Activated T-helper 2 cell treated with anti-CD3 and anti-CD28 coated beads, Interferon-gamma antibody, Interleukin-2, Interleukin-4, amounts not matched to agents 10 μg/mL and 5 μg/mL and 100 μg/mL, durations not matched to agents 14 hours and 24 hours and 36 hours (primary cell): ENCODE measurements at regions of chr16 and their contacts with region 1.

Region 1: DNA sequence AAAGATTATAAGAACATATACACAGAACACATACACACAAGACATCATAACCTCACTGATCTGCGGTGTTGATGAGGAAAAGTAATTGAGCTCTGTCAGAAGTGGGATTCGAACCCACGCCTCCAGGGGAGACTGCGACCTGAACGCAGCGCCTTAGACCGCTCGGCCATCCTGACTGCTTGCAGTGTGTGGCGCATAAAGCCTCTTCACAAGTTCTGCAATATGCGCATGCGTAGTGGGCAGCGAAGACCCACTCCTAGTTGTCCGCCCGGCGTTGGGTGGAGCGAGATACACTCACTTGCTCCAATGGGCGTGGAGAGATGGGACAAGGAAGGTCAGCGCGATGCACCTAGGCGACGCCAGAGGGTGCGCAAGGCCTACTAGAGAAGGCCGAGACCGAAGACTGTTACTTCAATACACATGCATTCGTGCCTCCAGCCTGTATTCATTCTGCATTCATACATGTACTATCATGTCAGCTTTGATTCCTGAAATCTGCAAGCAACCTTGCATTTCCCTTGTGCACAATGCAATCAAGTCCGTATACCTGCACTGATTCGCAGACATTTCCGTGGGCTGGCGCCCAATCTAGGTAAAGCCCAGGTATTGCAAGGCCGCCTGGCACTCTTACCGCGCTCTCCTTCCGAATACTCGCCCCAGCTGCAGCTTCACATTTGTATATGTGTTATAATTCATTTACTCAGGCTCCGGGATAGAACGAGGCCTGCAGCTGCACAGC is 16.1 kb upstream of the PLLP start:
- DNase-seq: peak; percentile 99
- H3K4me3 Mint-ChIP-seq: no peak overlapping the region
- H3K27ac Mint-ChIP-seq: no peak overlapping the region
- H3K4me1 Mint-ChIP-seq: peaks cover 16% of the 10 kb centered on the region
- H3K27me3 Mint-ChIP-seq: peaks cover 2% of the 10 kb centered on the region

Region 2: DNA sequence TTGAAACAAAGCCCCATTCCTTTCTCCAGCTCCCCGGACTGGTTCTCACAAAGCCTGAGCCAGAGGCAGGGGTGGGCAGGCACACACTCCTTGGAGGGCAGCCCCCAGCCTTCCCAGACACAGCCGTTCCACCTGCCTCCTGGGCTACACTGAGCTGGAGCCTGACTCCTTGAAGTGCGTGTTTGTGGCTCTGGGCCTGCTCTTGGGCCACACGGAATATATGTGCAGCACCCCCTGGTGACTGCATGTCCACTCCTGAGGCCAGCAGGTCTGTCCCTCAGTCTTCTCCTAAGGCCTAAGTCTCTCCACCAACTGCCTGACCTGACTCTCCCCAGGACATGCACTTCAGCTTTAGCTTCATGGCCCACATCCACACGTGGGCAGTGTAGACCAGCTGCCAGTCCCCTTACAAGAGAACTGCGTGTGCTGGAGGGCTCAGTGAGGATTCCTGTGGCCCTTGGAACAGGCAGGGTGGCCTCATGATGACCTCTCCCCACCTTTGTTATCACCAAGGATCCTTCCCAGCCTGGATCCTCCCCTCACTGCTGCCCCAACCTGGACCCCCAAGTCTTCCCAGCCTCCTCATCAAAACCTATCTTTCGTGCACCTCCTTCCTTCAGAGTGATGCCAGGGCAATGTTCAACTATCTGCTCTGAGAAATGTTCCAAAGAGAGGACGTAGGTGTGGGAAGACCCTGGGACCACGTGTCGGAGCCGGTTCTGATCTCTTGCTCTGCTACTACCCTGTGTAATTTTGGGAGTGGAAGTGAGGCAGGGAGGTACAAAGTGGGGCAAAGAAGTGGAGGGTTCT is 1657.2 kb before region 1 on chr16:
- intact Hi-C with region 1: no loop called
- DNase-seq: no peak
- H3K4me3 Mint-ChIP-seq: no peak overlapping the region
- H3K27ac Mint-ChIP-seq: no peak overlapping the region
- H3K4me1 Mint-ChIP-seq: no peaks in the 10 kb centered on the region
- H3K27me3 Mint-ChIP-seq: no peaks in the 10 kb centered on the region

Region 3: GRCh38 chr16:57244767-57245471 is 55.6 kb before region 1 on chr16 and contains the start of gene ARL2BP:
- intact Hi-C with region 1: loop called (anchors 1 kb)
- DNase-seq: peak; percentile 98
- H3K4me3 Mint-ChIP-seq: peak within 1 kb of the TSS; percentile 88
- H3K27ac Mint-ChIP-seq: peak within 1 kb of the TSS; percentile 97
- H3K4me1 Mint-ChIP-seq: peaks cover 14% of the 10 kb centered on the region
- H3K27me3 Mint-ChIP-seq: no peaks in the 10 kb centered on the region
- total RNA-seq, gene ARL2BP: 28.1 and 31.2 TPM in 2 replicates

Region 4: GRCh38 chr16:57422026-57422944 is 121.7 kb after region 1 on chr16:
- intact Hi-C with region 1: loop called (anchors 1 kb)
- DNase-seq: no peak
- H3K4me3 Mint-ChIP-seq: no peak overlapping the region
- H3K27ac Mint-ChIP-seq: no peak overlapping the region
- H3K4me1 Mint-ChIP-seq: peaks cover 14% of the 10 kb centered on the region
- H3K27me3 Mint-ChIP-seq: no peaks in the 10 kb centered on the region

Region 5: GRCh38 chr16:57519796-57520360 is 219.3 kb after region 1 on chr16:
- intact Hi-C with region 1: loop called (anchors 1 kb)
- DNase-seq: peak; percentile 62
- H3K4me3 Mint-ChIP-seq: no peak overlapping the region
- H3K27ac Mint-ChIP-seq: no peak overlapping the region
- H3K4me1 Mint-ChIP-seq: no peaks in the 10 kb centered on the region
- H3K27me3 Mint-ChIP-seq: no peaks in the 10 kb centered on the region